A673 (cell line): ENCODE measurements at regions of chr18 and their contacts with region 1.

Region 1: GRCh38 chr18:77271576-77272481 is 22.2 kb downstream of the GALR1 start:
- DNase-seq: no peak
- H3K4me3 ChIP-seq: no peak overlapping the region
- H3K27ac ChIP-seq: no peak overlapping the region
- H3K4me1 ChIP-seq: no peaks in the 10 kb centered on the region
- H3K27me3 ChIP-seq: no peaks in the 10 kb centered on the region
- CTCF ChIP-seq: no peak

Region 2: DNA sequence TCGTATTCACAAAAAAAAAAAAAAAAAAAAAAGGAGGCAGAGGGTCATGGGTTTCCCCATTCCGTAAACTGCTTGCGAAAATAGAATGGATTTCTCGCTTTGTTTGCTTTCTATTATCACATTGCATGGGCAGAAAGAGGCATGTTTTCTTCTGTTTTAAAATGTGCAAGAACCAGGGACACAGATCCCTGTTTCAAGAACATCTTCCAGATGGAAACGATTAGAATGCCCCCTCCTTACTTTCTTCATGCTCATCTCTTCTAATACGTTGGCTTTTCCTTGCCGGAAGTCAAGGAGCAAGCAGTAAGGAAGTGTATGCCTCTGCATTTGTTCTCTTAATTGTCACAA is 725.8 kb before region 1 on chr18:
- CTCF ChIA-PET with region 1: no interaction called
- POLR2A ChIA-PET with region 1: interaction called, 11 read pairs
- intact Hi-C with region 1: no loop called
- DNase-seq: peak; percentile 87
- H3K4me3 ChIP-seq: peak overlapping the region; percentile 6
- H3K27ac ChIP-seq: peak overlapping the region; percentile 62
- H3K4me1 ChIP-seq: peaks cover 48% of the 10 kb centered on the region
- H3K27me3 ChIP-seq: no peaks in the 10 kb centered on the region
- CTCF ChIP-seq: no peak